ENCODE measurements at regions of chr13 and their contacts with region 1.

Region 1: DNA sequence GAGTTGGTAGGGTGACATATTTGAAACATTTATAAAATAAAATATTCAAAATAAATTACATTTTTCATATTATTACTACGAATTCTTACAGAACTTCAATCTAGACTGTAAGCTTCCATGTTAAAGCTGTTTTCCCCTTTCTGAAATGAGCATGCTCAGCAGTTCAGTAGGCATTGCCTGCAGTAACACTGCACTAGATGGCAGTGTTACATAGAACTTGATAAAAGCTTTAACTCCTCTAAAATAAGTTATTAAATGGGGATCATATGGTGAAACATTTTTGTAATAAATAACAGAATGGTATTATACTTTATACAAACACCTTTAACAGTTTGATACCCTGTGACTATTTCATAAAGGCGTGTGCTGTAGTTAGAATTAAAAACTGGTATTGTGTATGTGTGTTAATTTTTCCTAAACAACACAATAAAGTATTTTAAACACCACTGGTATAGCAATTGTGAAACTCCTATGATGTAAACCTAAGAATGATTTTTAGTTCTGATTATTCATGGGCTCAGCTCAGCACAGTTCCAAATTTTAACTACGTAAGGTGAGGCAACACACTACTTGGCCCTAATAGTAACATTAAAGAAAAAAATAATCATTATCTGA is 11.6 kb upstream of the GPR18 start:
- DNase-seq: peak; percentile 71
- H3K4me3 ChIP-seq: no peak overlapping the region
- H3K27ac ChIP-seq: no peak overlapping the region
- H3K4me1 ChIP-seq: no peaks in the 10 kb centered on the region
- H3K27me3 ChIP-seq: no peaks in the 10 kb centered on the region
- CTCF ChIP-seq: peak; percentile 43 to 52
- POLR2A ChIP-seq: no peak

Region 2: GRCh38 chr13:99033814-99034213 is 235.9 kb before region 1 on chr13:
- CTCF ChIA-PET with region 1: interaction called, 4 read pairs
- POLR2A ChIA-PET with region 1: no interaction called
- dilution Hi-C with region 1: no loop called
- intact Hi-C with region 1: loop called (anchors 10 kb)
- DNase-seq: peak; percentile 59
- H3K4me3 ChIP-seq: no peak overlapping the region
- H3K27ac ChIP-seq: no peak overlapping the region
- H3K4me1 ChIP-seq: peaks cover 8% of the 10 kb centered on the region
- H3K27me3 ChIP-seq: no peaks in the 10 kb centered on the region
- CTCF ChIP-seq: peak; percentile 29 to 38
- POLR2A ChIP-seq: no peak

Region 3: DNA sequence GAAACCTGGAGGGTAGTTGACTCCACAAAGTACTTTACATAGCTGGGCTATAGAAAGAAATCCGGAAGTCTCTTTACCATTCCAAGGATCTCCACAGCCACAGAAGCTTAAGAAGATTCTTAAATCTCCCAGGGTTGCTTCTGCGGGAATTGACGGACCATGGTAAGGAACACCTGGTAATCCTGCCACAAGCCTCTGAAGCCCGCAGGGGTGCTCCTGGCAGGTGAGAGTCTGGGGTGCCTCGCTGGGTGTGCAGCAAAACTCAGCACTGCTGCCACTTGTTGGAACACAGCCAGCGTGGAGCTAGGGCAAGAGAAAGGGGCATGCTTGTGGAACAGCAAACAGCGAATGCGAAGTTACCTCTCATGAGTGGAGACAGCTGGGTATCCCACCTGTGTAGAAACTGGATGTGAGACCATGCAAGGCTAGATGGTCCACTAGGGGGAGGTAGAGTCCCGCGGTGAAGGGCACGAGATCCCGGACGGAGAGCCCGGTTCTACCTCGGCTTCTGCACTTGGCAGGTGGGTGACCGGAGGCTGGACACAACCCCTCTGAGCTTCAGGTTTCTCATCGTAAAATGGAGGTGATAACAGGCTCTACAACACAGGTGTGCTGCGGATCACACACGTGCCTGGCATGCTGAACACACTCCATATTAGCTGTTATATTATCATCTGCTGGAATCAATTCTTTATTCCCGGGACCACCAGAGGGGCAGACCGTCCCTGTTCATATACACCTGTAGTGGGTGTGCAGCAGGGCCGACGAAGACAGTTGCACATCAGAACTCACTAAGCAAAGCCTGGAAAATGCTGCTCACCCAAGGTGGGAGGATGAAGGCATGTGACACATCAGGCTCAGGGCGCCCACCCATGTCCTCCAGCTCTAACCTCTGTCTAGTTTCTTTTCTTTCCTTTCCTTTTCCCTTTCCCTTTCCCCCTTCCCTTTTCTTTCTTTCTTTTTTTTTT is 93.1 kb before region 1 on chr13:
- CTCF ChIA-PET with region 1: interaction called, 213 read pairs
- POLR2A ChIA-PET with region 1: no interaction called
- dilution Hi-C with region 1: loop called (anchors 25 kb)
- intact Hi-C with region 1: loop called (anchors 1 kb)
- DNase-seq: peak; percentile 62
- H3K4me3 ChIP-seq: no peak overlapping the region
- H3K27ac ChIP-seq: no peak overlapping the region
- H3K4me1 ChIP-seq: no peaks in the 10 kb centered on the region
- H3K27me3 ChIP-seq: peaks cover 6 to 14% of the 10 kb centered on the region in 2 experiments
- CTCF ChIP-seq: peak; percentile 86 to 94
- POLR2A ChIP-seq: no peak

Region 4: DNA sequence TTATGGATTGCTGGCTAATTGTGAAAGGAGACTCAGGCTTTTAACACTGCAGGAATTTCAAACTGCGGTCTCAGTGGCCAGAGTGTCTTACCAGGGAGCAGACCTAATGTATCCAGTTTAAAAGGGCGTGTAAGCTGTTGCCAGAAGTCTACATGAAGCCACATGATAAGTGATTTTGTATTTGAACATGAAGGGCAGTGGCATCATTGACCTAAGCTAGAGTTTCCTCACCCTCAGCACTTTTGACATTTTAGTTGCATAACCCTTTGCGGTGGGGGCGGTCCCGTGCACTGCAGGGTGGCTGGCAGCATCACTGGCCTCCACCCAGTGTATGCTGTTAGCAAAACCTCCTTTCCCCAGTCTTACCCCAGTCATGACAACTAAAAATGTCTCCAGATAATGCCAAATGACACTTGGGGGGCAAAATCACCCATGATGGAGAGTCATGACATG is 12.1 kb after region 1 on chr13:
- CTCF ChIA-PET with region 1: interaction called, 10 read pairs
- POLR2A ChIA-PET with region 1: no interaction called
- dilution Hi-C with region 1: no loop called
- intact Hi-C with region 1: no loop called
- DNase-seq: no peak
- H3K4me3 ChIP-seq: no peak overlapping the region
- H3K27ac ChIP-seq: no peak overlapping the region
- H3K4me1 ChIP-seq: no peaks in the 10 kb centered on the region
- H3K27me3 ChIP-seq: no peaks in the 10 kb centered on the region
- CTCF ChIP-seq: no peak
- POLR2A ChIP-seq: no peak

Region 5: GRCh38 chr13:99356158-99357091 is 86.7 kb after region 1 on chr13:
- CTCF ChIA-PET with region 1: interaction called, 15 read pairs
- POLR2A ChIA-PET with region 1: no interaction called
- dilution Hi-C with region 1: no loop called
- intact Hi-C with region 1: loop called (anchors 2 kb)
- DNase-seq: peak; percentile 94
- H3K4me3 ChIP-seq: peak overlapping the region in 1 of 3 experiments; percentile 15
- H3K27ac ChIP-seq: peak overlapping the region; percentile 97
- H3K4me1 ChIP-seq: peaks cover 24% of the 10 kb centered on the region
- H3K27me3 ChIP-seq: no peaks in the 10 kb centered on the region
- CTCF ChIP-seq: no peak
- POLR2A ChIP-seq: no peak

Region 6: GRCh38 chr13:99436686-99437416 is 167.1 kb after region 1 on chr13:
- CTCF ChIA-PET with region 1: interaction called, 289 read pairs
- POLR2A ChIA-PET with region 1: no interaction called
- dilution Hi-C with region 1: no loop called
- intact Hi-C with region 1: loop called (anchors 1 kb)
- DNase-seq: peak; percentile 84
- H3K4me3 ChIP-seq: no peak overlapping the region
- H3K27ac ChIP-seq: no peak overlapping the region
- H3K4me1 ChIP-seq: peaks cover 9% of the 10 kb centered on the region
- H3K27me3 ChIP-seq: peaks cover 13 to 29% of the 10 kb centered on the region in 2 experiments
- CTCF ChIP-seq: peak; percentile 100
- POLR2A ChIP-seq: no peak

Region 7: DNA sequence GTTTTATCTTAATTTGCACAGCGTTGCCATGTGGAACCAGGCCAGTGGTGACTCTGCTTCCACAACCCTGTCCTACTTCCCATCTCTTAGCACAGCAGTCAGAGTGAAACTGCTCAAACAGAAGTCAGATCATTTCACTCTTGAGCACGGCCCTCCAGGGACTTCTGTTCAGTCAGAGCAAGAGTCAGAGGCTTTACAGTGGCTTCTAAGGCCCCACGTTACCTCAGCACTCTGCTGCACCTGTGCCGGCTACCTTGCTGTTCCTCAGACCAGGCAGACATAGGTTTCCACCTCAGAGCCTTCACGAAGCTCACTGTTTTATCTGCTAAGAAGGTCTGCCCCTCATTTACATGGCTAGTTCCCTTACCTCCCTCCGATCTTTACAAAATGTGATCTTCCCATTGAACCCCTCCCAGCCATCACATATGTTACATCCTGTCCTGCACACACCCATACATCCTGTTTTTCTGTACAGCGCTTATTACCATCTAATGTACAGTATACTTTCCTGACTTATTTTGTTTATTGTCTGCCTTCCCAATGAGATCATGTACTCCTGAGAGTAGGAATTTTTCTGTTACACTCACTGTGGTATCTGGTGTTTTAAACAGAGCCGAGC is 273.2 kb after region 1 on chr13:
- CTCF ChIA-PET with region 1: no interaction called
- POLR2A ChIA-PET with region 1: no interaction called
- dilution Hi-C with region 1: no loop called
- intact Hi-C with region 1: no loop called
- DNase-seq: peak; percentile 28
- H3K4me3 ChIP-seq: no peak overlapping the region
- H3K27ac ChIP-seq: no peak overlapping the region
- H3K4me1 ChIP-seq: peaks cover 17% of the 10 kb centered on the region
- H3K27me3 ChIP-seq: no peaks in the 10 kb centered on the region
- CTCF ChIP-seq: no peak
- POLR2A ChIP-seq: no peak